ENCODE measurements at regions of chr5 and their contacts with region 1.

Region 1: GRCh38 chr5:125455041-125455440 is 708.6 kb upstream of the ZNF608 start:
- DNase-seq: no peak
- H3K4me3 ChIP-seq: no peak overlapping the region
- H3K27ac ChIP-seq: no peak overlapping the region
- H3K4me1 ChIP-seq: no peaks in the 10 kb centered on the region
- H3K27me3 ChIP-seq: no peaks in the 10 kb centered on the region
- CTCF ChIP-seq: no peak

Region 2: GRCh38 chr5:125401724-125402622 is 53.1 kb before region 1 on chr5:
- CTCF ChIA-PET with region 1: no interaction called
- dilution Hi-C with region 1: no loop called
- in situ Hi-C with region 1: no loop called
- intact Hi-C with region 1: no loop called
- DNase-seq: peak; percentile 35
- H3K4me3 ChIP-seq: no peak overlapping the region
- H3K27ac ChIP-seq: no peak overlapping the region
- H3K4me1 ChIP-seq: no peaks in the 10 kb centered on the region
- H3K27me3 ChIP-seq: no peaks in the 10 kb centered on the region
- CTCF ChIP-seq: no peak

Region 3: GRCh38 chr5:125424402-125425141 is 30.5 kb before region 1 on chr5:
- CTCF ChIA-PET with region 1: no interaction called
- dilution Hi-C with region 1: no loop called
- in situ Hi-C with region 1: no loop called
- intact Hi-C with region 1: no loop called
- DNase-seq: no peak
- H3K4me3 ChIP-seq: no peak overlapping the region
- H3K27ac ChIP-seq: no peak overlapping the region
- H3K4me1 ChIP-seq: no peaks in the 10 kb centered on the region
- H3K27me3 ChIP-seq: no peaks in the 10 kb centered on the region
- CTCF ChIP-seq: no peak

Region 4: GRCh38 chr5:125536582-125536981 is 81.5 kb after region 1 on chr5:
- CTCF ChIA-PET with region 1: no interaction called
- dilution Hi-C with region 1: no loop called
- in situ Hi-C with region 1: no loop called
- intact Hi-C with region 1: loop called (anchors 1 kb)
- DNase-seq: peak; percentile 84
- H3K4me3 ChIP-seq: no peak overlapping the region
- H3K27ac ChIP-seq: peak overlapping the region; percentile 45
- H3K4me1 ChIP-seq: peaks cover 5% of the 10 kb centered on the region
- H3K27me3 ChIP-seq: no peaks in the 10 kb centered on the region
- CTCF ChIP-seq: no peak

Measured in mammary epithelial cell (primary cell).